Caco-2 (cell line): ENCODE measurements at regions of chr2 and their contacts with region 1.

Region 1: DNA sequence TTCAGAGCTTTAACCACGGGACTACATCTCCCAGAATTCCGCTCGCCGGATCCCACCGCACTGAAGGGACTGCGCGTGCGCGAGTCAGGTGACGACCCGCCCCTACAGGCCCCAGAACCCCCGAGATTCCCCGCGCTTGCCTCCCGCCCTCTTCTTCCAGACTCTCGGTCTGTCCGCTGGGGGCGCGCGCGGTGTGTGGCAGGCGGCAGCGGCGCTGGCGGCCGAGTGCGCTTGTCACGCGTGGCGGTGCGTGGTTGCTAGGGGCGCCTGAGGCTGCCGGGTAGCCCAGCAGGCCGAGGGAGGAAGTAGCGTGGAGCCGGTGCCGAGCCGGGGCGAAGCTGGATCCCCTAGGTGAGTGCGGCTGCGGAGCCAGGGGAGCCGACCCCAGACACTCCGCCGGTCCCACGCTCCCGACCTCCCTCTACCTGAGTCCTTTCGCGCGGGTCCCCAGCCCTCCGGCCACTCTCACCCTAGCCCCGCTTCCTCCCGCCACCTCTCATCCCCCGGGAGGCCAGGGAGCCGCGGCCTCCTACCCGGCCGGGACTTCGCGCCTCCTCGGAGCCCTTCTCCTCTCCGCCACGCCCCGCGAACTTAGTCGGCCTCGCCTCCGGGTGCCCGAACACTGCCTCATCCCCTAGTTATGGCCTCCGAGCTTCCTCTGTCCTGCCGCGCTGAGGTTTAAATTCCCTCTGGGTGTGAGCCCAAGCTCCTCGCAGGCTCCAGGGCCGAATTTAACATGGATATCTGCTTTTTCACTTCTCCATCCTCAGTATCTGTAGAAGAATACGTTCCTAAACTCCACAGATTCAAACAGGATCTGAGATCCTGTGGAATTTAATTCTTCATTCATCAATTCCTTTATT is at the start of gene TTLL4:
- DNase-seq: peak; percentile 98 to 99
- H3K4me3 ChIP-seq: peak within 1 kb of the TSS; percentile 100
- H3K4me3 Mint-ChIP-seq: peak within 1 kb of the TSS; percentile 97
- H3K27ac Mint-ChIP-seq: peak within 1 kb of the TSS; percentile 94
- H3K4me1 ChIP-seq: peaks cover 18% of the 10 kb centered on the region
- H3K4me1 Mint-ChIP-seq: peaks cover 13% of the 10 kb centered on the region
- H3K27me3 ChIP-seq: no peaks in the 10 kb centered on the region
- H3K27me3 Mint-ChIP-seq: no peaks in the 10 kb centered on the region
- CTCF ChIP-seq: peak; percentile 74 to 89
- total RNA-seq, gene TTLL4: 86.6 and 87.9 TPM in 2 replicates

Region 2: DNA sequence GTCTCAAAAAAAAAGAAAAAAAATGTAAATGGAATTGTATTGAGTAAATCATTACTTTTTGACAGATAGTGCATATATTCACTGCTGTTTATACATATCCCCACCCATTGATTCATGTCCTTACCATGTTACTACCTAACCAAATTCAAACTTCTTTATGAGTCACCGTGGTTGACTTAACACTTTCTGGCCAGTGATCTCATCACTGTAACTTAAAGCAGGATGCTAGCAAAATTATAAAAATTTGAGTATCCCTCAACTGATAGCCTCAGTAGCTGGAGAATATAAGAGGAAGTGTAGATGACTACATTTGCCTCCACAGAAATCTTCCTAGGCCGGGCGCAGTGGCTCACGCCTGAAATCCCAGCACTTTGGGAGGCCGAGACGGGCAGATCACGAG is 128.8 kb before region 1 on chr2:
- CTCF ChIA-PET with region 1: no interaction called
- POLR2A ChIA-PET with region 1: no interaction called
- intact Hi-C with region 1: no loop called
- DNase-seq: no peak
- H3K4me3 ChIP-seq: no peak overlapping the region
- H3K4me3 Mint-ChIP-seq: no peak overlapping the region
- H3K27ac Mint-ChIP-seq: no peak overlapping the region
- H3K4me1 ChIP-seq: no peaks in the 10 kb centered on the region
- H3K4me1 Mint-ChIP-seq: no peaks in the 10 kb centered on the region
- H3K27me3 ChIP-seq: no peaks in the 10 kb centered on the region
- H3K27me3 Mint-ChIP-seq: no peaks in the 10 kb centered on the region
- CTCF ChIP-seq: no peak

Region 3: DNA sequence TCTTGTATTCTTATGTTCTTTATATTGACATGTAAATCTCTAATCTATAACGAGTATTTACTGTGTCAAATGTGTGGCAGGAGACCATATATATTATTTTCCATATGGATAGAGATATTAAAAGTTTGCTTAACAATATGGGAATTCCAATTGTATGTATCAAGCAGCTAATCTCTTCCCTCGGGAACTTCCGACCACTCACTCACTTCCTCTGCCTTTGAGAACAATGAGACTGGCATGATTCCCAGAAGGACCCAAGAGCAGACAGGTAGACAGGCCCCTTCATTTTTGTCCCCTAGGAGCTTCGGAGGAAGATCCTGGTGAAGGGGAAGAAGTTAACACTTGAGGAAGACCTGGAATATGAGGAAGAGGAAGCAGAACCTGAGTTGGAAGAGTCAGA is 79.1 kb before region 1 on chr2:
- CTCF ChIA-PET with region 1: no interaction called
- POLR2A ChIA-PET with region 1: no interaction called
- intact Hi-C with region 1: no loop called
- DNase-seq: no peak
- H3K4me3 ChIP-seq: no peak overlapping the region
- H3K4me3 Mint-ChIP-seq: no peak overlapping the region
- H3K27ac Mint-ChIP-seq: no peak overlapping the region
- H3K4me1 ChIP-seq: no peaks in the 10 kb centered on the region
- H3K4me1 Mint-ChIP-seq: no peaks in the 10 kb centered on the region
- H3K27me3 ChIP-seq: no peaks in the 10 kb centered on the region
- H3K27me3 Mint-ChIP-seq: no peaks in the 10 kb centered on the region
- CTCF ChIP-seq: no peak

Region 4: GRCh38 chr2:218659258-218659987 is 51.5 kb before region 1 on chr2 and contains the starts of genes BCS1L and ZNF142:
- CTCF ChIA-PET with region 1: interaction called, 21 read pairs
- POLR2A ChIA-PET with region 1: interaction called, 3 read pairs
- intact Hi-C with region 1: loop called (anchors 1 kb)
- DNase-seq: peak; percentile 94
- H3K4me3 ChIP-seq: peak within 1 kb of the TSS; percentile 80
- H3K4me3 Mint-ChIP-seq: peak within 1 kb of the TSS; percentile 95
- H3K27ac Mint-ChIP-seq: peak within 1 kb of the TSS; percentile 85
- H3K4me1 ChIP-seq: peaks cover 6% of the 10 kb centered on the region; the same call in 1 of the 2 replicates
- H3K4me1 Mint-ChIP-seq: peaks cover 9% of the 10 kb centered on the region
- H3K27me3 ChIP-seq: no peaks in the 10 kb centered on the region
- H3K27me3 Mint-ChIP-seq: no peaks in the 10 kb centered on the region
- CTCF ChIP-seq: no peak
- total RNA-seq, gene BCS1L: 68.3 and 74.6 TPM in 2 replicates
- total RNA-seq, gene ZNF142: 37.0 and 38.5 TPM in 2 replicates

Region 5: DNA sequence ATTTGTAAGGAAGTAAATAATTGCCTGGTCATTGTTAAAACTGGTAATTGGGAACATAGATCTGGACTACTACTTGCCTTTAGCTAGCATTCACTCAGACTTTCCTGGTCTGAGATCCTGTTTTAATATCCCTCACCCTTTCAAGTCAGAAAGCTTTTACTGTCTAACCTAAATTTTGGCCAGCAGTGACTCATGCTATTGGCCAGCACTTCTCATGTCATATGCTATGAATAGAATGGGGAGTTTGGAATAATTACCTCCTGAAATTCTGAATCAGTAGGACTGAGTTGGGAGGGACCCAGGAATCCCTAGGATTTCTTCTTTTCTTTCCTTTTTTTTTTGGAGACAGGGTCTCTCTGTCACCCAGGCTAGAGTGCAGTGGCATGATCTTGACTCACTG is 19.7 kb before region 1 on chr2:
- CTCF ChIA-PET with region 1: interaction called, 13 read pairs
- POLR2A ChIA-PET with region 1: interaction called, 6 read pairs
- intact Hi-C with region 1: loop called (anchors 1 kb)
- DNase-seq: no peak
- H3K4me3 ChIP-seq: no peak overlapping the region
- H3K4me3 Mint-ChIP-seq: no peak overlapping the region
- H3K27ac Mint-ChIP-seq: no peak overlapping the region
- H3K4me1 ChIP-seq: no peaks in the 10 kb centered on the region
- H3K4me1 Mint-ChIP-seq: peaks cover 6% of the 10 kb centered on the region
- H3K27me3 ChIP-seq: no peaks in the 10 kb centered on the region
- H3K27me3 Mint-ChIP-seq: no peaks in the 10 kb centered on the region
- CTCF ChIP-seq: no peak

Region 6: GRCh38 chr2:218852911-218853667 is 142.2 kb after region 1 on chr2:
- CTCF ChIA-PET with region 1: interaction called, 17 read pairs
- POLR2A ChIA-PET with region 1: no interaction called
- intact Hi-C with region 1: no loop called
- DNase-seq: peak; percentile 64 to 75
- H3K4me3 ChIP-seq: no peak overlapping the region
- H3K4me3 Mint-ChIP-seq: no peak overlapping the region
- H3K27ac Mint-ChIP-seq: no peak overlapping the region
- H3K4me1 ChIP-seq: peaks cover 26% of the 10 kb centered on the region
- H3K4me1 Mint-ChIP-seq: peaks cover 37% of the 10 kb centered on the region
- H3K27me3 ChIP-seq: no peaks in the 10 kb centered on the region
- H3K27me3 Mint-ChIP-seq: peaks cover 3% of the 10 kb centered on the region
- CTCF ChIP-seq: peak; percentile 87 to 91

Region 7: DNA sequence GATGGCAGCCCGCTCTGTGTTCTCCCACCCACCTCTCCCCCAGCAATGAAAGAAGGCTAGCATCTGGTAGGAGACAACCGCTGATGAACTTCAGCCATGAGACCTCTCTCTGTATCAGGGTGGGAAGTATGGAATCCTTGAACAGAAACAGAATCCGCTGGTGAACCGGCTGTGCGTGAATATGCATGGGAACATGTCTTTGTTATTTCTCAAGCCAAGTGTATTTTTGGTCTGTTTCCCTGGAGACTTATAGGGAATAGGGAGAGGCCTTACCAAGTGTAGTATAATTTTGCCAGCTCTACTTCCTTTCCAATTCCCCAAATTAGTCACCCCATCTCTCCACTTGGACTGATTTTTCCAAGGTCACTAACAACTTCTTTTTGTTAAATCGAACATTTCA is 199.8 kb after region 1 on chr2:
- CTCF ChIA-PET with region 1: no interaction called
- POLR2A ChIA-PET with region 1: no interaction called
- intact Hi-C with region 1: no loop called
- DNase-seq: no peak
- H3K4me3 ChIP-seq: no peak overlapping the region
- H3K4me3 Mint-ChIP-seq: no peak overlapping the region
- H3K27ac Mint-ChIP-seq: no peak overlapping the region
- H3K4me1 ChIP-seq: peaks cover 9% of the 10 kb centered on the region; the same call in 1 of the 2 replicates
- H3K4me1 Mint-ChIP-seq: peaks cover 8% of the 10 kb centered on the region
- H3K27me3 ChIP-seq: no peaks in the 10 kb centered on the region
- H3K27me3 Mint-ChIP-seq: no peaks in the 10 kb centered on the region
- CTCF ChIP-seq: no peak

Region 8: DNA sequence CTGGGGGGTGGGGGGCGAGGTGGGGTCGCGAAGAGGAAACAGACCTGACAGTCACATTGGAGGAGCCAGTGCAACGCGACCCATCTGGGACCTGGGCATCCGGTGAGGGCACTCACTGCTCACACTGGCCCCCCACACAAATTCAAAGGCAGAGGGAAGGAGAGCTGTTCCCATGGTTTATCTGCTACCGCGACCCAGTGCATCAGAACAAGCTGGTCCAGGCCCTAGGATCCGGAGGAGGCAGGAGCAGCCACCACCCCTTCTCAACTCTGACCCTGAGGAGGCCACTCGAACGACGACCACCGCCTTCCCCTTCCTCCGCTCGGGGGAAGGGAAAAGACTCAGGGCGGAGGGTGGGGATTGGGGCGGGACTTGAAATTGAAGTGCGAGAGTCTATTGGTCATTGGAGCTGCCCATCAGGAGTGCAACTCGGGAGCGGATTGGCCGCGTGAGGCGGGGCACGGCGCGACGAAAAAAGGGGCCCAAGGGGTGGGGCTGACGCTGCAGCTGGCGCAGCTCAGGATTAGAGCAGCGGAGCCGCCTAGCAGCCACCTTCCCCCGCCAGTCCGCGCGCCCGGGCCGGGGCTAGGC is 248.3 kb after region 1 on chr2 and contains the start of gene CDK5R2:
- CTCF ChIA-PET with region 1: no interaction called
- POLR2A ChIA-PET with region 1: no interaction called
- intact Hi-C with region 1: loop called (anchors 10 kb)
- DNase-seq: peak; percentile 94
- H3K4me3 ChIP-seq: peak within 1 kb of the TSS; percentile 52
- H3K4me3 Mint-ChIP-seq: peak within 1 kb of the TSS; percentile 76
- H3K27ac Mint-ChIP-seq: no peak within 1 kb of the TSS
- H3K4me1 ChIP-seq: peaks cover 36% of the 10 kb centered on the region
- H3K4me1 Mint-ChIP-seq: peaks cover 16% of the 10 kb centered on the region
- H3K27me3 ChIP-seq: peaks cover 4% of the 10 kb centered on the region
- H3K27me3 Mint-ChIP-seq: peaks cover 32% of the 10 kb centered on the region
- CTCF ChIP-seq: no peak
- total RNA-seq, gene CDK5R2: 0.18 and 0.21 TPM in 2 replicates